ENCODE measurements at regions of chr4 and their contacts with region 1.

Region 1: GRCh38 chr4:6909073-6909965 is at the start of gene TBC1D14:
- DNase-seq: peak in 1 of 2 experiments; percentile 91
- H3K4me3 ChIP-seq: peak within 1 kb of the TSS; percentile 58 to 92 (median 75)
- H3K27ac ChIP-seq: peak within 1 kb of the TSS; percentile 94; the same call in 1 of the 2 replicates
- H3K4me1 ChIP-seq: peaks cover 3 to 25% (median 11%) of the 10 kb centered on the region in 4 experiments
- H3K27me3 ChIP-seq: peaks cover 0 to 14% (median 5%) of the 10 kb centered on the region in 4 experiments; a peak in 4 of 7 replicates
- CTCF ChIP-seq: no peak; a peak in 1 of 4 replicates
- EP300 ChIP-seq: no peak
- POLR2A ChIP-seq: peak in 1 of 2 experiments; percentile 70; a peak in 2 of 3 replicates
- RAD21 ChIP-seq: peak; percentile 1 to 14; a peak in 1 of 4 replicates
- total RNA-seq, gene TBC1D14: 48.2 and 49.7 TPM in 2 replicates

Region 2: GRCh38 chr4:6885951-6886557 is 23.3 kb before region 1 on chr4:
- CTCF ChIA-PET with region 1: interaction called, 22 read pairs
- POLR2A ChIA-PET with region 1: interaction called, 14 read pairs
- DNase-seq: no peak
- H3K4me3 ChIP-seq: no peak overlapping the region
- H3K27ac ChIP-seq: no peak overlapping the region
- H3K4me1 ChIP-seq: no peaks in the 10 kb centered on the region
- H3K27me3 ChIP-seq: no peaks in the 10 kb centered on the region
- CTCF ChIP-seq: peak in 2 of 3 experiments; percentile 2 to 33; a peak in 2 of 4 replicates
- EP300 ChIP-seq: no peak
- POLR2A ChIP-seq: no peak
- RAD21 ChIP-seq: peak in 1 of 2 experiments; percentile 24; a peak in 1 of 4 replicates

Region 3: GRCh38 chr4:6892190-6892908 is 17.0 kb before region 1 on chr4:
- CTCF ChIA-PET with region 1: interaction called, 22 read pairs
- POLR2A ChIA-PET with region 1: interaction called, 14 read pairs
- DNase-seq: no peak
- H3K4me3 ChIP-seq: no peak overlapping the region
- H3K27ac ChIP-seq: no peak overlapping the region
- H3K4me1 ChIP-seq: no peaks in the 10 kb centered on the region; a peak in 1 of 7 replicates
- H3K27me3 ChIP-seq: no peaks in the 10 kb centered on the region
- CTCF ChIP-seq: peak; percentile 26 to 60 (median 48); a peak in 3 of 4 replicates
- EP300 ChIP-seq: no peak
- POLR2A ChIP-seq: no peak
- RAD21 ChIP-seq: peak; percentile 54 to 63; a peak in 3 of 4 replicates

Region 4: GRCh38 chr4:6898763-6899162 is 10.6 kb before region 1 on chr4:
- CTCF ChIA-PET with region 1: interaction called, 12 read pairs
- POLR2A ChIA-PET with region 1: interaction called, 16 read pairs
- DNase-seq: no peak
- H3K4me3 ChIP-seq: no peak overlapping the region
- H3K27ac ChIP-seq: no peak overlapping the region
- H3K4me1 ChIP-seq: no peaks in the 10 kb centered on the region
- H3K27me3 ChIP-seq: no peaks in the 10 kb centered on the region
- CTCF ChIP-seq: no peak
- EP300 ChIP-seq: no peak
- POLR2A ChIP-seq: no peak
- RAD21 ChIP-seq: no peak

Region 5: DNA sequence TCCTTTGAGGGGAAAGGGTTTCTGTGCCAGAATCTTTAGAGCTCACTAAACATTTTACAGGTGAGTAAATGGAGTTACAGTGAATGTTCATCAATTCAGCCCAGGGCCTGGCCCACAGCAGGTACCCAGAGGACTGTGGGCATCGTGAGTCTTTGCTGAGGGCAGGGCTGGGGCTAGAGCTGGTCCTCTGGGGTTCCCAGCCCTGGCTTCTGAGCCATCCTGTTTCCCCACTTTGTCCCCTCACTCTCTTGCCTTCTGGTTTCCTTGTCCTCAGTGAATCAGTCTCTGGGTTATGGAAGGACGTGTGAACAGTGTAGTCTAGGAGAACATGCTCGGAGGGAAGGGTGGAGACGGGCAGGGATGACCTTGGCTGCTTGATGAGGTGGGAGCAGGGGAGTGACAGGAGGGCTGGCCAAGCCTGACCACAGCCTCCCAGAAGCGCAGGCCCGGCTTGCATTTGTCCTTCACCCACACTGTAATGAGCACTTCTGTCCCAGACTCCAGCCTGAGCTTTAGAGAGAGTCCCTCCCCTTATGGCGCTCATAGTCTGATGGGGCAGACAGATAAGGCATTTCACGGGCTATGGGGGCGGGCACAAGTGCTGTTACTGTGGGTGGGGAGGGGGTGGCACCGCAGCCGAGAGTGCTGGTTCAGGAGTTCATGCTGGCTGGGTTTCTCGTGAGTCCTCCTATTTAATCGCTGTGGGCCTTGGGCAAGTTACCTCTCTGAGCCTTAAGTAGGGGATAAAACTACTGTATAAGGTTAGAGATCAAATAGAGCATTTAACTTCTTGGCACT is 17.6 kb after region 1 on chr4:
- CTCF ChIA-PET with region 1: interaction called, 56 read pairs
- POLR2A ChIA-PET with region 1: interaction called, 4 read pairs
- DNase-seq: no peak
- H3K4me3 ChIP-seq: no peak overlapping the region
- H3K27ac ChIP-seq: no peak overlapping the region
- H3K4me1 ChIP-seq: peaks cover 0 to 9% (median 3%) of the 10 kb centered on the region in 4 experiments; a peak in 6 of 7 replicates
- H3K27me3 ChIP-seq: no peaks in the 10 kb centered on the region
- CTCF ChIP-seq: no peak
- EP300 ChIP-seq: no peak
- POLR2A ChIP-seq: no peak
- RAD21 ChIP-seq: no peak

Region 6: DNA sequence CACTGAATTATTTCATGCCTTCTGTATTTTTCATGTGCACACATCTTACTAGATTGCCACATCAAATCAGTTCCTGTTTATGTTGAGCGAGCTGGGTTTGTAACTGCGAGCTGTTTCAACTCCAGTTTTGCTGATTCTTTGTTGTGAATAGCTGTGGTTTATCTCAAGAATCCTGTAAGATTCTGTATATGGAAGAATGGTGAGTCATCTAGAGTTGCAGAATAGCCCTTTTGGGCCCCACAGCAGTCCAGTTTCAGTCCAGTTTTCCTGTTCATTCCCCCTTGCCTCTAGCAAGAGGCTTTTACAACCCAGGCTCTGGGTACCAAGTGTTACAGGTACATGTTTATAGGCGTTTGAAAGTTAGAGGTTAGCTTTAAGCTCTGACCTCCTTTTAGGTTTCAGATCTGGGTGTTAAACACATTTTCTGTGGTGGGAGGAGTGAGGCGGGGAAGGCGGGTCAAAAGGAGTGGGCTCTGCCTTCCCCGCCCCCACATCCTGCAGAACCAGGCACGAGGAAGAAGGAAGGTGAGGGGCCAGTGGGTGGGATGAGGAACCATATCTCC is 33.0 kb after region 1 on chr4:
- CTCF ChIA-PET with region 1: interaction called, 7 read pairs
- POLR2A ChIA-PET with region 1: interaction called, 22 read pairs
- DNase-seq: no peak
- H3K4me3 ChIP-seq: no peak overlapping the region
- H3K27ac ChIP-seq: no peak overlapping the region
- H3K4me1 ChIP-seq: peaks cover 16 to 52% (median 36%) of the 10 kb centered on the region in 4 experiments
- H3K27me3 ChIP-seq: no peaks in the 10 kb centered on the region
- CTCF ChIP-seq: no peak
- EP300 ChIP-seq: no peak
- POLR2A ChIP-seq: no peak
- RAD21 ChIP-seq: no peak

Region 7: GRCh38 chr4:6986781-6987587 is 77.7 kb after region 1 on chr4:
- CTCF ChIA-PET with region 1: interaction called, 6 read pairs
- POLR2A ChIA-PET with region 1: interaction called, 15 read pairs
- DNase-seq: peak; percentile 78 to 93
- H3K4me3 ChIP-seq: peak overlapping the region; percentile 66 to 93 (median 80)
- H3K27ac ChIP-seq: peak overlapping the region; percentile 75
- H3K4me1 ChIP-seq: peaks cover 5 to 17% (median 8%) of the 10 kb centered on the region in 4 experiments
- H3K27me3 ChIP-seq: no peaks in the 10 kb centered on the region
- CTCF ChIP-seq: no peak
- EP300 ChIP-seq: peak in 1 of 2 experiments; percentile 4; a peak in 1 of 3 replicates
- POLR2A ChIP-seq: peak; percentile 32 to 63; a peak in 2 of 3 replicates
- RAD21 ChIP-seq: peak in 1 of 2 experiments; percentile 8; a peak in 1 of 4 replicates

Measured in H1 (cell line).